PC-3 (cell line): ENCODE measurements at regions of chr3 and their contacts with region 1.

Region 1: GRCh38 chr3:82133070-82133606 is 371.7 kb upstream of the GBE1 start:
- DNase-seq: peak; percentile 66
- ATAC-seq: peak; percentile 85
- H3K4me3 ChIP-seq: no peak overlapping the region
- H3K27ac ChIP-seq: no peak overlapping the region
- H3K4me1 ChIP-seq: no peaks in the 10 kb centered on the region
- H3K27me3 ChIP-seq: no peaks in the 10 kb centered on the region
- CTCF ChIP-seq: peak; percentile 91

Region 2: GRCh38 chr3:81485444-81485865 is 647.7 kb before region 1 on chr3:
- CTCF ChIA-PET with region 1: no interaction called
- POLR2A ChIA-PET with region 1: no interaction called
- intact Hi-C with region 1: loop called (anchors 10 kb)
- DNase-seq: peak; percentile 73
- ATAC-seq: peak; percentile 98
- H3K4me3 ChIP-seq: no peak overlapping the region
- H3K27ac ChIP-seq: no peak overlapping the region
- H3K4me1 ChIP-seq: peaks cover 5% of the 10 kb centered on the region
- H3K27me3 ChIP-seq: no peaks in the 10 kb centered on the region
- CTCF ChIP-seq: no peak

Region 3: DNA sequence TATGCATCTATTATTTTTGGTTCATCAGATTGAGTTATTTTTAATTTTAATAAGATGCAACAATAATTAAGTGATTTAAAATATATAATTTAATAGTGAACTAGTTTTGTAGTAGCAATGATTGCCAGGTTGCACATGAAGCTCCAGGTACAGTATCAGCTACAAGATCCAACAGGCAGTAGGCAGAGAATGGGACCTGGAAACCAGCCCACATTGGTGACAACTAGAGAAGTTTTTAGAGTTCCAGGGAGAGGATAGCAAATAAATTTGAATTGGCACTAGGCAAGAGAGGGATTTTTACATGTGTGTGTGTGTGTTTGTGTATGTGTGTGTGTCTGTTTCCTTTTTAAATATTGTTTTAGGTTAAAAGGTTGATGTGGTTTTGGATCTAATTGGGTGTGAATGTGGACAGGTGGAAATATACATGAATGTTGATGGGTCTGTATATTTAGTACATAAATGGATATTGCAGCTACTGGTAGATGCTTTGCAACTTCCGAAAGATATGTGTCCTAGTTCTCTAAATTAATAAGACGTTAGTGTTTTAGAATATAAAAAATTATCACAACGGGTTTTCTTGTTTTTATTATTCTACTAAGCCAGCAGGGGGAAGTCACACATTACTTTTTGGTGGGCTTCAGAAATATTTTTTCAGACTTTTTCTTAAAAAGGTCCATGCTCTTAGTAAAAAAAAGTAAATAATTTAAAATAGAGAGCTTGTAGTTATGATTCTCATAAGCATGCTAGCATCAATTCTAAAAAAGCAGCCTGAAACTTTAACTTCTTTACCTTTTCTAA is 261.6 kb before region 1 on chr3:
- CTCF ChIA-PET with region 1: interaction called, 4 read pairs
- POLR2A ChIA-PET with region 1: no interaction called
- intact Hi-C with region 1: loop called (anchors 2 kb)
- DNase-seq: peak; percentile 19
- ATAC-seq: no peak
- H3K4me3 ChIP-seq: no peak overlapping the region
- H3K27ac ChIP-seq: no peak overlapping the region
- H3K4me1 ChIP-seq: no peaks in the 10 kb centered on the region
- H3K27me3 ChIP-seq: no peaks in the 10 kb centered on the region
- CTCF ChIP-seq: peak; percentile 65

Region 4: GRCh38 chr3:81910244-81910852 is 222.8 kb before region 1 on chr3:
- CTCF ChIA-PET with region 1: no interaction called
- POLR2A ChIA-PET with region 1: no interaction called
- intact Hi-C with region 1: loop called (anchors 1 kb)
- DNase-seq: peak; percentile 69
- ATAC-seq: peak; percentile 74
- H3K4me3 ChIP-seq: no peak overlapping the region
- H3K27ac ChIP-seq: no peak overlapping the region
- H3K4me1 ChIP-seq: peaks cover 7% of the 10 kb centered on the region; the same call in 1 of the 2 replicates
- H3K27me3 ChIP-seq: no peaks in the 10 kb centered on the region
- CTCF ChIP-seq: peak; percentile 89

Region 5: GRCh38 chr3:81995329-81995728 is 137.8 kb before region 1 on chr3:
- CTCF ChIA-PET with region 1: no interaction called
- POLR2A ChIA-PET with region 1: no interaction called
- intact Hi-C with region 1: loop called (anchors 1 kb)
- DNase-seq: peak; percentile 44
- ATAC-seq: peak; percentile 77
- H3K4me3 ChIP-seq: no peak overlapping the region
- H3K27ac ChIP-seq: no peak overlapping the region
- H3K4me1 ChIP-seq: no peaks in the 10 kb centered on the region
- H3K27me3 ChIP-seq: no peaks in the 10 kb centered on the region
- CTCF ChIP-seq: peak; percentile 63

Region 6: DNA sequence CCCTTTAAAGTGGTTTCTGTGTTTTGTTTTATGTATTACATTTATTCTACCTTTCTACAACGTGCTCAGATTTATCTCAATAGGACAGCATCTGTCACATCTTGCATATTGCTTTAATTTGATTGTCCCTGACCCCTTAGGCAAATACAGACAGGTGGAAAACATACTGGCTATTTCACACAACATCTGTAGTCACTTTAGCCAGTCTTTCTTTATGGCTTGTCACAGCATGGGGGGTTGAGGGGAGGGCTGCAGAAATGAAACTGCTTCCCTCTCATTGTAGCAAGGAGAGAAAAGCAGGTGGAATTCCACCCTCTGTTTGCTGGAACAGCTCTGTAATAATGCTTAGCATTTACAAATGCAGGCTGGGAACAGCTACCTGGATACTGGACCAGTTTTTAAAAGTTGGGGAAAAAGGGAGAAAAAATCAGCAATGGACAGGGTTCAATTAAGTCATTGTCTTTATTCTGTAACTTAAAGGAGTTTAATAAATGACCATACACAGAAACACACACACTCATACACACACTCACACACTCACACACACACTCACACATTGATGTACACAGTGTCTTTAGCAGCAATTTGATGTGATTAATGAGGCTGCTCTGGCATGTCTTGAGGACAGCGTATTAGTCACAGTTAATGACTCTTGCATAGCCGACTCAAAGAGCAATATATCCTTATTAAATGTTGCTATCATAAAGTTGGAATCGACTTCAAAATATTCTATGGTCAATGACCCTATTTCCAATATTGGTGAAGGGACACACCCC is 88.0 kb before region 1 on chr3:
- CTCF ChIA-PET with region 1: no interaction called
- POLR2A ChIA-PET with region 1: no interaction called
- intact Hi-C with region 1: no loop called
- DNase-seq: peak; percentile 30
- ATAC-seq: peak; percentile 48
- H3K4me3 ChIP-seq: no peak overlapping the region
- H3K27ac ChIP-seq: no peak overlapping the region
- H3K4me1 ChIP-seq: no peaks in the 10 kb centered on the region
- H3K27me3 ChIP-seq: no peaks in the 10 kb centered on the region
- CTCF ChIP-seq: no peak

Region 7: GRCh38 chr3:82087958-82088357 is 45.2 kb before region 1 on chr3:
- CTCF ChIA-PET with region 1: no interaction called
- POLR2A ChIA-PET with region 1: no interaction called
- intact Hi-C with region 1: loop called (anchors 2 kb)
- DNase-seq: peak; percentile 88
- ATAC-seq: peak; percentile 61
- H3K4me3 ChIP-seq: no peak overlapping the region
- H3K27ac ChIP-seq: peak overlapping the region; percentile 58
- H3K4me1 ChIP-seq: peaks cover 49% of the 10 kb centered on the region
- H3K27me3 ChIP-seq: no peaks in the 10 kb centered on the region
- CTCF ChIP-seq: no peak

Region 8: GRCh38 chr3:82143661-82144412 is 10.7 kb after region 1 on chr3:
- CTCF ChIA-PET with region 1: no interaction called
- POLR2A ChIA-PET with region 1: no interaction called
- intact Hi-C with region 1: no loop called
- DNase-seq: no peak
- ATAC-seq: no peak
- H3K4me3 ChIP-seq: no peak overlapping the region
- H3K27ac ChIP-seq: no peak overlapping the region
- H3K4me1 ChIP-seq: no peaks in the 10 kb centered on the region
- H3K27me3 ChIP-seq: no peaks in the 10 kb centered on the region
- CTCF ChIP-seq: no peak